Mammary epithelial cell (primary cell): ENCODE measurements at regions of chr6 and their contacts with region 1.

Region 1: DNA sequence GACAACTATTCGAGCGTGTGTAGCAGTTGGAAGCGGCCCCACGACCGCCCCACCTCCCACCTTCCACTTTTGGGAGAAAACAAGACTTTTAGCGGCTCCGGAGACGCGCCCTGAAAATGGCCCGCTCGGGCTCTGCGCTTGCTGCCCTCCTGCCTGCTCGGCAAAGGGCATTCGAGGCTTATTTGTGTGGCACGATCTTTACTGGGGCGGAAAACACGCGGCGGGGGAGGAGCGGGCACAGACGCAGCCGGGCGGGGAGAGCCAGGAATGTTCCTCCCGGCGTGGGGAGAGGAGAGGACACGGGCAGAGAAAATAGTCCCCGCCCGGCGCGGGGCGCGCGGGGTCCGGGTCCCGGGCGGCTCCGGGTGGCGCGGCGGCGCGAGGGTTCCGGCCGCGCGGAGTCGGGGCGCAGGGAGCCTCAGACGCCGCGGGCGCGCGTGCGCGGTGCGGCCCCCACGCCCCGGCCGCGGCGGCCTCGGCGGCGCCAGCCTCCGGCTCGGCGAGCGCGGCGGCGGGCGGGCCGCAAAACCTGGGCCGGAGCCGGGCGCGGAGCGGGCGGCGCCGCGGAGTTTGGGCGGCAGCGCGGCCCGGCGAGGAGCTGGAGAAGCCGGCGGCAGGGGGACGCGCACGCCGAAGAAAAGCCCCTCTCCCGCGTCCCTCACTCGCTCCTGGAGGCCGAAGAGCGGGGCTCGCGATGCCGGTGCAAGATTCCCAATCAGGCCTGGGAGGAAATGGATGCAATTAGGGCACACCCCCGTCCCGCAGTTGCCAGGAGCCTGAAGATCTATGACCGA is 90.0 kb upstream of the ARID1B start:
- DNase-seq: peak; percentile 77
- H3K4me3 ChIP-seq: peak overlapping the region; percentile 70 to 94 (median 83)
- H3K27ac ChIP-seq: peak overlapping the region; percentile 84
- H3K4me1 ChIP-seq: peaks cover 14% of the 10 kb centered on the region
- H3K27me3 ChIP-seq: no peaks in the 10 kb centered on the region
- CTCF ChIP-seq: no peak

Region 2: GRCh38 chr6:156699017-156699421 is 11.8 kb after region 1 on chr6:
- CTCF ChIA-PET with region 1: no interaction called
- dilution Hi-C with region 1: no loop called
- in situ Hi-C with region 1: no loop called
- intact Hi-C with region 1: loop called (anchors 1 kb)
- DNase-seq: peak; percentile 94
- H3K4me3 ChIP-seq: no peak overlapping the region
- H3K27ac ChIP-seq: peak overlapping the region; percentile 16
- H3K4me1 ChIP-seq: peaks cover 14% of the 10 kb centered on the region
- H3K27me3 ChIP-seq: no peaks in the 10 kb centered on the region
- CTCF ChIP-seq: no peak

Region 3: GRCh38 chr6:156729248-156729647 is 42.1 kb after region 1 on chr6:
- CTCF ChIA-PET with region 1: no interaction called
- dilution Hi-C with region 1: no loop called
- in situ Hi-C with region 1: no loop called
- intact Hi-C with region 1: loop called (anchors 2 kb)
- DNase-seq: peak; percentile 85
- H3K4me3 ChIP-seq: no peak overlapping the region
- H3K27ac ChIP-seq: no peak overlapping the region
- H3K4me1 ChIP-seq: no peaks in the 10 kb centered on the region
- H3K27me3 ChIP-seq: peaks cover 1% of the 10 kb centered on the region
- CTCF ChIP-seq: no peak

Region 4: DNA sequence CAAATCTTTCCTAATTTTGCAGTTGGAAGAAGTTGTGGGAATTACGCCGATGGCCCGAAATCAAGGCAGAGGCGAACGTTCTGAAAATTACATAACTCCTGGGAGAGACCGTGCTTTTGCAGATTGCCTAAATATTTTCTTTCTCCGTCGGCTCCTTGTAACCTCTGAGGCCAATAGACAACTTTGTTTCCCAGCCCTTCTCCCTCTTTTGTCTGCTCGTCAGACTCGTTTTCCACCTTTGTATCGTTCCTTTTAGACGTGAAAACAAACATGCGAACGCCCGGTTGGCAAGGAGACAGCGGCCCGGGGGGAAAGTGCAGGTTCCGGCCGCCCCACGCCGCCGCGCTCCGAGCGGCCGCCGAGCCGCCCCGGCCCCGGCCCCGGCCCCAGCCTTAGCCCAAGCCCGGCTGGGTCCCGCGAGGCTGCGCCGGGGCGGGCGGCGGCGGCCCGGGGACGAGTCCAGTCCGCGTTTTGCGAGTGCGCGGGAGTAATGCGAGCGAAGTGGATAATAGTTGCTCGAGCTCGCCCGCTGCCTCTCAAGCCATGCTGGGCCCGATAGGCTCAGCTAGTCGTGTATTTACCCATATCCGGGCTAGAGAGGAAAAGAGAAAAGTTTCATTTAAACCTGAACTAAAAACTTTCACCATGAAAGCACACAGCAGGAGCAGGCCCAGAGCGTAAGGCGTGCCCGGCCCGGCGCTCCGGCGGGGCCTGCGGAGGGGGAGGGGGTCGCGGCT is 89.8 kb after region 1 on chr6 and contains the start of gene ARID1B:
- CTCF ChIA-PET with region 1: no interaction called
- dilution Hi-C with region 1: no loop called
- in situ Hi-C with region 1: loop called in 1 of 2 experiments (anchors 10 kb)
- intact Hi-C with region 1: loop called (anchors 1 kb)
- DNase-seq: peak; percentile 76
- H3K4me3 ChIP-seq: peak within 1 kb of the TSS; percentile 85 to 92 (median 91)
- H3K27ac ChIP-seq: peak within 1 kb of the TSS; percentile 93
- H3K4me1 ChIP-seq: peaks cover 24% of the 10 kb centered on the region
- H3K27me3 ChIP-seq: no peaks in the 10 kb centered on the region
- CTCF ChIP-seq: no peak
- total RNA-seq, gene ARID1B: 42.5 to 53.7 TPM

Region 5: GRCh38 chr6:157021344-157021992 is 334.3 kb after region 1 on chr6:
- CTCF ChIA-PET with region 1: no interaction called
- dilution Hi-C with region 1: no loop called
- in situ Hi-C with region 1: no loop called
- intact Hi-C with region 1: loop called (anchors 2 kb)
- DNase-seq: peak; percentile 84
- H3K4me3 ChIP-seq: peak overlapping the region; percentile 72 to 87 (median 85)
- H3K27ac ChIP-seq: peak overlapping the region; percentile 97
- H3K4me1 ChIP-seq: peaks cover 17% of the 10 kb centered on the region
- H3K27me3 ChIP-seq: no peaks in the 10 kb centered on the region
- CTCF ChIP-seq: peak in 1 of 2 donors; percentile 36